Right cardiac atrium (tissue), 5 donors: ENCODE measurements at regions of chr3 and their contacts with region 1.

Region 1: GRCh38 chr3:133464573-133464972 is 64.7 kb downstream of the BFSP2 start:
- DNase-seq: no peak
- ATAC-seq: no peak
- H3K4me3 ChIP-seq: no peak overlapping the region
- H3K27ac ChIP-seq: no peak overlapping the region
- H3K4me1 ChIP-seq: peaks cover 7% of the 10 kb centered on the region
- H3K27me3 ChIP-seq: no peaks in the 10 kb centered on the region

Region 2: DNA sequence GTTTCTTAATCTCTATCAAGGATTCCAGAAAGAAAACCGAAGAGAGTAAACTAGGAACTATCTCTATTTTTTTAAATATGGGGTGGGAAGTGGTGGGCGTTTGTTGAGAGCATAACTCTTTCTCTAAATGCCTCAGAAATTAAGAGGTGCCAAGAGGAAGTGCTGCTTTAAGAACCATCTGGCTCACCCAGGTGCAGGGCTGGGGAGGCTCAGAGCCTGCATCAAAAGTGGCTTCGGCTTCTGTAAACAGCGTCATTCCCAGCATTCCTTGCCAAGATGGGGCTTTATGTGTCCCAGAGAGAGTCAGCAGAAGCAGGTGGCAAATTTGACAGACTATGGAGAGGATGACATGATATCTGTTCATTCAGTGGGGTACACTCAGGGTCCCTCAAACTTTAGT is 188.0 kb before region 1 on chr3:
- intact Hi-C with region 1: no loop called
- DNase-seq: no peak
- ATAC-seq: no peak
- H3K4me3 ChIP-seq: no peak overlapping the region
- H3K27ac ChIP-seq: no peak overlapping the region
- H3K4me1 ChIP-seq: no peaks in the 10 kb centered on the region
- H3K27me3 ChIP-seq: no peaks in the 10 kb centered on the region

Region 3: GRCh38 chr3:133527081-133527715 is 62.6 kb after region 1 on chr3:
- intact Hi-C with region 1: no loop called
- DNase-seq: no peak
- ATAC-seq: no peak
- H3K4me3 ChIP-seq: no peak overlapping the region
- H3K27ac ChIP-seq: no peak overlapping the region
- H3K4me1 ChIP-seq: no peaks in the 10 kb centered on the region
- H3K27me3 ChIP-seq: no peaks in the 10 kb centered on the region

Region 4: GRCh38 chr3:133573054-133573628 is 108.6 kb after region 1 on chr3:
- intact Hi-C with region 1: loop called in 1 of 4 experiments (anchors 10 kb)
- DNase-seq: peak; percentile 100
- ATAC-seq: peak; percentile 95 to 97
- H3K4me3 ChIP-seq: peak overlapping the region; percentile 95
- H3K27ac ChIP-seq: peak overlapping the region; percentile 80
- H3K4me1 ChIP-seq: peaks cover 6% of the 10 kb centered on the region
- H3K27me3 ChIP-seq: no peaks in the 10 kb centered on the region

Region 5: GRCh38 chr3:133633439-133633838 is 168.9 kb after region 1 on chr3:
- intact Hi-C with region 1: no loop called
- DNase-seq: no peak
- ATAC-seq: no peak
- H3K4me3 ChIP-seq: no peak overlapping the region
- H3K27ac ChIP-seq: no peak overlapping the region
- H3K4me1 ChIP-seq: no peaks in the 10 kb centered on the region
- H3K27me3 ChIP-seq: no peaks in the 10 kb centered on the region